CD8-positive, alpha-beta memory T cell (primary cell): ENCODE measurements at regions of chr2 and their contacts with region 1.

Region 1: DNA sequence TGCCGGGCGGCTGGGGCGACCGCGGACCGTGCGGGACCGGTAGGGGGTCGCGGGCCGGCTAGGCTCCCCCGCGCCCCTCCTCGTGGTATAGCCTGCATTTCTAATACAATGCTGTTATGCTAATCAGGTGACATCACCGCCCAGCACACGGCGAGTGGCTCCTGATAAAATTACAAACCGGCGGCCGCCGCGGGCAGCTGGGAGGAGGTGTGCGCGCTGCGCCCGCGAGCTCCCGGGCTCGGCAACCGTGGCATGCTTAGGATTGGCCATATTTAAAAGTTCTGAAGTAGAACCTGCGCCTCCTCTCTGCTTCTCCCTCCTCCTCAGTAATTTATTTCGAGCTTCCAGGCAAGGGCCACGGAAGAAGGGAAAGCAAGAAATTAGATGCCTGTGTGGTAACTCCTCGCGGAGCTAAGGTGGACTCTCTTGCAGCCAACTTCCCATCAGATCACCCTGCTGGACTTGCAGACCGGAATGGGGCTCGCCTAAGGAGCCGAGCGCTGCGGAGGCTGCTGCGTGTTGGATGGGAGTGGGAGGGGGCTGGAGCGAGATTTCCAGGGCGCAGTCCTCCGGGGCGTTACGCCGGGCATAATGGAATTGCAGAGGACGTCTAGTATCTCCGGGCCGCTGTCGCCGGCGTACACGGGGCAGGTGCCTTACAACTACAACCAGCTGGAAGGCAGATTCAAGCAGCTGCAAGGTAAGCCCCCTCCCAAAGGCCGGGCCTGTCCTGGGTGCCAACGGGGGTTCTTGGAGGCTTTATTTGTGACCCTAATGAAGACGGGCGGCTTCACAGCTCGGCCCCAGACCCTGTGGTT is 102.3 kb downstream of the SPTBN1 start:
- DNase-seq: peak; percentile 57 to 83 (median 66)
- H3K4me3 ChIP-seq: peak overlapping the region; percentile 98
- H3K4me3 Mint-ChIP-seq: peak overlapping the region; percentile 90 to 100 (median 98)
- H3K27ac ChIP-seq: peak overlapping the region; percentile 74
- H3K27ac Mint-ChIP-seq: peak overlapping the region; percentile 85 to 99 (median 96)
- H3K4me1 ChIP-seq: peaks cover 36% of the 10 kb centered on the region
- H3K4me1 Mint-ChIP-seq: peaks cover 39 to 47% (median 44%) of the 10 kb centered on the region in 3 donors
- H3K27me3 ChIP-seq: no peaks in the 10 kb centered on the region
- H3K27me3 Mint-ChIP-seq: no peaks in the 10 kb centered on the region

Region 2: DNA sequence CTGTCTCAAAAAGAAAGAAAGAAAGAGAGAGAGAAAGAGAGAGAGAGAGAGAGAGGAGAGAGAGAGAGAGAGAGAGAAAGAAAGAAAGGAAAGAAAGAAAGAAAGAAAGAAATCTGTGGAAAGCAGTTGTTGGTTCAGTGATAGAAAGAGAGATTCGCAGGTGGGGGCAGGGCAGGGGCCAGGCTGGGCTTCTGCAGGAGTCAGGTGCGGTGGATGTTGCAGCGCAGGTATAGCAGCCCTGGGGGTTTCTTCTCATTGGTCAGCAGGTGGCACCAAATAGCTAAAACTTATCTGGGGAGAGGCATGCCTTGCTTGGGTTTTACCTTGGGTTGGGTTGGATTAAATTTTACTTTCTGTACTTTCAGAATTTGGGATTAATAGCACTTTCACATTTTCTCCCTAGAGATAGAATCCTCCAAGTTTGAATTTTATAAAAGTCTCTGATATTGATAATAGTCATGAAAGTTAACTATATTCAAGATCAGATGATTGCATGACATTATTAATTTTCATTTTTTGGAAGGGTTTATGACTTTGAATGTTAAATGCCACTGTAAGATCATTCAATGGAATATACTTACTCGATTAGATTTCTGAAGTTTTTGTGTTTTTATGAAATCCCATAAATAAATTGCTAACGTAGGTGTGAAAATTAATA is 35.6 kb before region 1 on chr2:
- CTCF ChIA-PET with region 1: interaction called, 25 read pairs
- POLR2A ChIA-PET with region 1: no interaction called
- DNase-seq: peak; percentile 36 to 75 (median 68)
- H3K4me3 ChIP-seq: no peak overlapping the region
- H3K4me3 Mint-ChIP-seq: peak overlapping the region in 4 of 7 donors; percentile 23 to 57 (median 42)
- H3K27ac ChIP-seq: no peak overlapping the region
- H3K27ac Mint-ChIP-seq: peak overlapping the region in 5 of 8 donors; percentile 1 to 93 (median 64)
- H3K4me1 ChIP-seq: no peaks in the 10 kb centered on the region
- H3K4me1 Mint-ChIP-seq: peaks cover 4 to 9% (median 4%) of the 10 kb centered on the region in 3 donors
- H3K27me3 ChIP-seq: no peaks in the 10 kb centered on the region
- H3K27me3 Mint-ChIP-seq: peaks cover 2 to 13% of the 10 kb centered on the region in 2 donors

Region 3: DNA sequence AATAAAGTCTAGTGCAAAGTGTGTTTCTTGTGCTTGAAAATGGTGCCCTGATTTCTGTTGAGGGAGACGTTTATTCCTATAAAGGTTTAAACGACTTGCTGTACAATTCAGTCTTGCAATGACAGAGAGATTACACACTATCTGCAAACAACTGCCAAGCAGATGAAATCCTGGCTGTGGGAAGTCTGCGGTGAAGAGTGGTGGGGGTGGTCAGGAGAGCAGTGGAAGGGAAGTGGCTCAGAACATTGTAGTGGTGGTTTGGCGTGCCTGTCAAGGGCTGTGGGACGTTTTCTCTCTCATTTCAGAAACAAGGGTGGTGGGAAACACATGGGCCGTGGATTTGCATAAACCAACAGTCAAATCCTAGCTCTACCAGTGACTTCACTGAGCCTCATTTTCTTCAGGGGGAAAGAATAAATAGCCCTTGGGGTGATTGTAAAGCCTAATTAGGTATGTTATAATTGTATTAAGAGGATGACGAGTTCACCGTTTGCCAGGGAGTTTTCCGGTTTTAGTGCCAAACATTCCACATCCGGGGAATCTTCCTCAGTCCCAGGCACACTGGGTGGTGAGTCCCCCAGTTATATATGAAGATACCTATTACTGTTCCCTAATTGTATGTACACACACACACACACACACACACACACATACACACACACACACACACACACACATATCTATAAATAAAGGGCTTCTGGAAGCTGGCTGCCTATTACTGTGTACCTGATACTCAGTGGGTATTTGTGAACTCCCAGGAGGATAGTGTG is 12.7 kb after region 1 on chr2:
- CTCF ChIA-PET with region 1: interaction called, 54 read pairs
- POLR2A ChIA-PET with region 1: interaction called, 105 read pairs
- DNase-seq: peak; percentile 47 to 81 (median 73)
- H3K4me3 ChIP-seq: peak overlapping the region; percentile 72
- H3K4me3 Mint-ChIP-seq: peak overlapping the region; percentile 86 to 96 (median 90)
- H3K27ac ChIP-seq: peak overlapping the region; percentile 84
- H3K27ac Mint-ChIP-seq: peak overlapping the region; percentile 86 to 100 (median 98)
- H3K4me1 ChIP-seq: peaks cover 93% of the 10 kb centered on the region
- H3K4me1 Mint-ChIP-seq: peaks cover 88 to 97% (median 96%) of the 10 kb centered on the region in 3 donors
- H3K27me3 ChIP-seq: no peaks in the 10 kb centered on the region
- H3K27me3 Mint-ChIP-seq: no peaks in the 10 kb centered on the region

Region 4: GRCh38 chr2:54579684-54580620 is 21.6 kb after region 1 on chr2:
- CTCF ChIA-PET with region 1: interaction called, 28 read pairs
- POLR2A ChIA-PET with region 1: interaction called, 105 read pairs
- DNase-seq: peak in 4 of 5 donors; percentile 51 to 82 (median 68)
- H3K4me3 ChIP-seq: peak overlapping the region; percentile 35
- H3K4me3 Mint-ChIP-seq: peak overlapping the region; percentile 45 to 78 (median 71)
- H3K27ac ChIP-seq: peak overlapping the region; percentile 49
- H3K27ac Mint-ChIP-seq: peak overlapping the region; percentile 75 to 98 (median 92)
- H3K4me1 ChIP-seq: peaks cover 95% of the 10 kb centered on the region
- H3K4me1 Mint-ChIP-seq: peaks cover 88 to 98% (median 98%) of the 10 kb centered on the region in 3 donors
- H3K27me3 ChIP-seq: no peaks in the 10 kb centered on the region
- H3K27me3 Mint-ChIP-seq: no peaks in the 10 kb centered on the region

Region 5: GRCh38 chr2:54597153-54597848 is 38.9 kb after region 1 on chr2:
- CTCF ChIA-PET with region 1: interaction called, 34 read pairs
- POLR2A ChIA-PET with region 1: interaction called, 23 read pairs
- DNase-seq: peak in 2 of 5 donors; percentile 17 to 48
- H3K4me3 ChIP-seq: peak overlapping the region; percentile 7
- H3K4me3 Mint-ChIP-seq: peak overlapping the region; percentile 20 to 90 (median 83)
- H3K27ac ChIP-seq: peak overlapping the region; percentile 39
- H3K27ac Mint-ChIP-seq: peak overlapping the region; percentile 84 to 97 (median 93)
- H3K4me1 ChIP-seq: peaks cover 89% of the 10 kb centered on the region
- H3K4me1 Mint-ChIP-seq: peaks cover 75 to 95% (median 95%) of the 10 kb centered on the region in 3 donors
- H3K27me3 ChIP-seq: no peaks in the 10 kb centered on the region
- H3K27me3 Mint-ChIP-seq: no peaks in the 10 kb centered on the region

Region 6: GRCh38 chr2:54604871-54605270 is 46.5 kb after region 1 on chr2:
- CTCF ChIA-PET with region 1: interaction called, 11 read pairs
- POLR2A ChIA-PET with region 1: interaction called, 9 read pairs
- DNase-seq: no peak
- H3K4me3 ChIP-seq: no peak overlapping the region
- H3K4me3 Mint-ChIP-seq: peak overlapping the region in 3 of 7 donors; percentile 22 to 57 (median 41)
- H3K27ac ChIP-seq: no peak overlapping the region
- H3K27ac Mint-ChIP-seq: peak overlapping the region in 5 of 8 donors; percentile 1 to 86 (median 78)
- H3K4me1 ChIP-seq: peaks cover 73% of the 10 kb centered on the region
- H3K4me1 Mint-ChIP-seq: peaks cover 92 to 95% (median 92%) of the 10 kb centered on the region in 3 donors
- H3K27me3 ChIP-seq: no peaks in the 10 kb centered on the region
- H3K27me3 Mint-ChIP-seq: no peaks in the 10 kb centered on the region

Region 7: DNA sequence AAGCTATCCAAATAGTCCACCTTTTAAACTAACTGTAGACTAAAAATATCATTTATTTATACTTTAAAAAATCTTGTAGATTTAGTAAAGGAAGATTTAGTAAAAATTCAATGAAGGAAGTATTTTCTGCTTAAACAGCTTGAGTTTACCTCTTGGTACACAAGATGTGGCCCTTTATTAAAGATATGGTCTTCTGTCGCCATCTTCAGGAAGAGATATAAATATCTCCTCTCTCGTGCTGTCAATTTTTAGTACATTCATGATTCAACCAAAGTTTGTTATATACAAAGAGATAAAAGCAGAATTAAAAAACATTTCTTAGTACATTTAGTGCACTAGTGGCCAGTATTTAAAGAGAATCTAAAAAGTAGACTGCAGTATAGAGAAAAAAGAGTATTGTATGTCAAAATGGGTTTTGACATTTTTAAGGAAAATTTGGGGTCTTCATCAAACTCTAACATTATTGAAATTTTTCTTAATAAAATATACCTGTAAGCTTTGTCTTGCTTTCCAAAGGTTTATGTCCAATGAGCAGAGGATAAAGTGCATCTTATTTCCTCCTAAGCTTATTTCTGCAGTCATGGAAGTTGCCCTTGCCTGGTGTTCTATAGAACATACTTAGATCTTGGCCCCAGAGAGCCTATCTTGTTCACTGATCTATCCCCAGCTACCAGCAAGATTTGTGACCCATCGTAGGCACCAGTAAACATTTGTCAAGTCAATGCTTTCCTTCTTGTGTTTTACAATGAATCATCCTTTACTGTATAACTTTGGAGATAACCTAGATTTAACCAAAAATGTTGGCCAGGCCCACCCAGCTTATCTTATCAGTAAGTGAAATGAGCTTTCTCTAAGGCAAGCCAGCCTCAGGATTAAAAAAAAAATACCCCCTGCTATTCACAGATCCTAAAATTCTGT is 146.6 kb after region 1 on chr2:
- CTCF ChIA-PET with region 1: interaction called, 11 read pairs
- POLR2A ChIA-PET with region 1: no interaction called
- DNase-seq: peak in 2 of 5 donors; percentile 42 to 49
- H3K4me3 ChIP-seq: no peak overlapping the region
- H3K4me3 Mint-ChIP-seq: no peak overlapping the region
- H3K27ac ChIP-seq: no peak overlapping the region
- H3K27ac Mint-ChIP-seq: no peak overlapping the region
- H3K4me1 ChIP-seq: no peaks in the 10 kb centered on the region
- H3K4me1 Mint-ChIP-seq: no peaks in the 10 kb centered on the region
- H3K27me3 ChIP-seq: peaks cover 5% of the 10 kb centered on the region
- H3K27me3 Mint-ChIP-seq: peaks cover 7 to 15% of the 10 kb centered on the region in 2 donors